Activated CD4-positive, alpha-beta T cell treated with anti-CD3 and anti-CD28 coated beads, Interleukin-2, amount 10 ng/mL, durations not matched to agents 7 days and 5 days (primary cell): ENCODE measurements at regions of chr11 and their contacts with region 1.

Region 1: GRCh38 chr11:77127232-77127911 is 674 bp upstream of the MYO7A start:
- DNase-seq: peak; percentile 44
- H3K4me3 Mint-ChIP-seq: no peak overlapping the region
- H3K27ac Mint-ChIP-seq: no peak overlapping the region
- H3K4me1 Mint-ChIP-seq: peaks cover 4% of the 10 kb centered on the region
- H3K27me3 Mint-ChIP-seq: no peaks in the 10 kb centered on the region

Region 2: DNA sequence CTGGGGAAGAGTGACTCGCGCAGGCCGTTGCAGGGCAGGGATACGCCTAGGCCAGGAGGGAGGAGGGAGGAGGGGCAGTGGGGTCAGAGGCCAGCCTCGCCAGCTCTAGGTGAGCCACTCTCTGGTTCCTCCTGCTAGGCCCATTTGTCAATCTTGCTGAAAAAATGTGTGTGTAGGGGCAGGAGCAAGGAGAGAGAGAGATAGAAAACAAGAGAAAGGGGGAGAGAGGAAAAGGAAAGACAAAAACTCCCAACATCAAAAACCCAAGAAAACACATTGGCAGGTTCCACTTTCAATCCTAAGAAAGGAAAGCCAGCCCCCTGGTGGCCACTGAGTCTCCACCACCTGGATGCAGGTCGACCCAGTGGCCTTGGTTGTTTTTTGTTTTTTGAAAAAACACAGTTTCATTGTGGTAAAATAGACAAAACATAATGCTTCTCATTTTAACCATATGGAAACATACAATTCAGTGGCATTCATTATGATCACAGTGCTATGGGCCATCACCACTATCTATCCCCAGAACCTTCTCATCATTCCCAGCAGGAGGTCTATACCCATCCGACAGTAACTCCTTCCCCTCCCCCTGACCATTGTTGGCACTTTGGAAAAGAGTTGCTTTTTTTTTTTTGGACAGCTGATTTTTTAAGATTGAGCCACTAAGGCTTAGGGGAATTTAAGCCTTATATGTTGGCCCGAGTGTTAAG is 13.8 kb before region 1 on chr11:
- CTCF ChIA-PET with region 1: interaction called, 10 read pairs
- POLR2A ChIA-PET with region 1: no interaction called
- DNase-seq: peak; percentile 41
- H3K4me3 Mint-ChIP-seq: no peak overlapping the region
- H3K27ac Mint-ChIP-seq: no peak overlapping the region
- H3K4me1 Mint-ChIP-seq: peaks cover 4% of the 10 kb centered on the region
- H3K27me3 Mint-ChIP-seq: no peaks in the 10 kb centered on the region

Region 3: DNA sequence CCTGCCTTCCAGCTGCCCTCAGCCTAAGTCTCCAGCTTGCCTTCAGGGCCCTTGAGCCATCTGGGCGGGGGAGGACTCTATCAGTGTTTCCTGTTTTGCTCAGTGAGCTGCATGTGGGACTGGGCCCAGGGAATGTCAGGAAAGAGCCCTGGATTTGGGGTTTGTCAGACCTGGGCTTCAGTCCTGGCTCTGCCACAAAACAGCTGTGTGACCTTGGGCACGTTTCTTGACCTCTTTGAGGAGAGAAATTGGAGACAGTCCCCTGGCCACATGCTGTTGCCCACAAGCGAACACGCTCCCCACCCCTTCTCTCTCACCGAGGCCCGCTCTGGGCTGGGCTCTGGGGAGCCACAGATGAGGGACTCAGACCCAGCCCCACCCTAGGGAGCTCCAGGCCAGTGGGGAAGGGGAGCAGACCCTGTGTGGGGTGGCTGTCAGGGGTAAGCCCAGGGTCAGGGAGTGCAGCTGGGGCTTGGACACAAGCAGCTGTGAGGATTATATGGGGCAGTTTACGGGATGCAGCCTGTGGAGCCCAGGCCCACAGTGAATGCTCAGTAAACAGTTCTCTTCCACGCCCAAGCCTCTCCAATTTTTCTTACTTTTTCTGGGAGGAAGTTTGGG is 13.0 kb after region 1 on chr11:
- CTCF ChIA-PET with region 1: interaction called, 18 read pairs
- POLR2A ChIA-PET with region 1: no interaction called
- DNase-seq: no peak
- H3K4me3 Mint-ChIP-seq: no peak overlapping the region
- H3K27ac Mint-ChIP-seq: no peak overlapping the region
- H3K4me1 Mint-ChIP-seq: peaks cover 15% of the 10 kb centered on the region
- H3K27me3 Mint-ChIP-seq: peaks cover 17% of the 10 kb centered on the region

Region 4: GRCh38 chr11:77147668-77148321 is 20.4 kb after region 1 on chr11:
- CTCF ChIA-PET with region 1: interaction called, 18 read pairs
- POLR2A ChIA-PET with region 1: no interaction called
- DNase-seq: peak; percentile 46
- H3K4me3 Mint-ChIP-seq: peak overlapping the region; percentile 8
- H3K27ac Mint-ChIP-seq: no peak overlapping the region
- H3K4me1 Mint-ChIP-seq: peaks cover 36% of the 10 kb centered on the region
- H3K27me3 Mint-ChIP-seq: peaks cover 8% of the 10 kb centered on the region

Region 5: GRCh38 chr11:77187776-77188632 is 60.6 kb after region 1 on chr11:
- CTCF ChIA-PET with region 1: interaction called, 32 read pairs
- POLR2A ChIA-PET with region 1: no interaction called
- DNase-seq: peak; percentile 75
- H3K4me3 Mint-ChIP-seq: no peak overlapping the region
- H3K27ac Mint-ChIP-seq: no peak overlapping the region
- H3K4me1 Mint-ChIP-seq: no peaks in the 10 kb centered on the region
- H3K27me3 Mint-ChIP-seq: peaks cover 4% of the 10 kb centered on the region